ENCODE measurements at regions of chr15 and their contacts with region 1.

Region 1: GRCh38 chr15:74144153-74144775 is 13.9 kb downstream of the ISLR2 start:
- DNase-seq: no peak
- ATAC-seq: peak; percentile 92
- H3K4me3 Mint-ChIP-seq: no peak overlapping the region
- H3K27ac Mint-ChIP-seq: no peak overlapping the region
- H3K4me1 Mint-ChIP-seq: peaks cover 29% of the 10 kb centered on the region
- H3K27me3 Mint-ChIP-seq: peaks cover 10% of the 10 kb centered on the region
- CTCF ChIP-seq: no peak

Region 2: GRCh38 chr15:74025436-74025835 is 118.8 kb before region 1 on chr15:
- CTCF ChIA-PET with region 1: no interaction called
- POLR2A ChIA-PET with region 1: no interaction called
- DNase-seq: no peak
- ATAC-seq: no peak
- H3K4me3 Mint-ChIP-seq: no peak overlapping the region
- H3K27ac Mint-ChIP-seq: no peak overlapping the region
- H3K4me1 Mint-ChIP-seq: no peaks in the 10 kb centered on the region
- H3K27me3 Mint-ChIP-seq: no peaks in the 10 kb centered on the region
- CTCF ChIP-seq: no peak

Region 3: GRCh38 chr15:74172701-74173379 is 28.6 kb after region 1 on chr15:
- CTCF ChIA-PET with region 1: interaction called, 15 read pairs
- POLR2A ChIA-PET with region 1: no interaction called
- DNase-seq: peak; percentile 36
- ATAC-seq: peak; percentile 23
- H3K4me3 Mint-ChIP-seq: no peak overlapping the region
- H3K27ac Mint-ChIP-seq: no peak overlapping the region
- H3K4me1 Mint-ChIP-seq: peaks cover 53% of the 10 kb centered on the region
- H3K27me3 Mint-ChIP-seq: peaks cover 3% of the 10 kb centered on the region; the same call in 1 of the 2 replicates
- CTCF ChIP-seq: no peak

Region 4: GRCh38 chr15:74265046-74265639 is 120.9 kb after region 1 on chr15:
- CTCF ChIA-PET with region 1: interaction called, 10 read pairs
- POLR2A ChIA-PET with region 1: no interaction called
- DNase-seq: peak; percentile 86
- ATAC-seq: peak; percentile 65
- H3K4me3 Mint-ChIP-seq: no peak overlapping the region
- H3K27ac Mint-ChIP-seq: no peak overlapping the region
- H3K4me1 Mint-ChIP-seq: peaks cover 17% of the 10 kb centered on the region
- H3K27me3 Mint-ChIP-seq: peaks cover 4% of the 10 kb centered on the region; the same call in 1 of the 2 replicates
- CTCF ChIP-seq: no peak

Region 5: GRCh38 chr15:74396445-74397238 is 252.4 kb after region 1 on chr15:
- CTCF ChIA-PET with region 1: no interaction called
- POLR2A ChIA-PET with region 1: no interaction called
- DNase-seq: no peak
- ATAC-seq: peak; percentile 13
- H3K4me3 Mint-ChIP-seq: no peak overlapping the region
- H3K27ac Mint-ChIP-seq: no peak overlapping the region
- H3K4me1 Mint-ChIP-seq: peaks cover 16% of the 10 kb centered on the region
- H3K27me3 Mint-ChIP-seq: peaks cover 5% of the 10 kb centered on the region; the same call in 1 of the 2 replicates
- CTCF ChIP-seq: no peak

Measured in WTC11 (cell line).